Ovary (tissue), 10 donors: ENCODE measurements at regions of chr18 and their contacts with region 1.

Region 1: GRCh38 chr18:21897811-21898210 is 157.2 kb downstream of the MIB1 start:
- DNase-seq: peak in 3 of 5 donors; percentile 32 to 55 (median 43)
- H3K4me3 ChIP-seq: no peak overlapping the region
- H3K27ac ChIP-seq: no peak overlapping the region
- H3K4me1 ChIP-seq: no peaks in the 10 kb centered on the region
- H3K27me3 ChIP-seq: no peaks in the 10 kb centered on the region
- CTCF ChIP-seq: peak; percentile 46 to 63 (median 59)
- EP300 ChIP-seq: no peak
- POLR2A ChIP-seq: no peak

Region 2: GRCh38 chr18:21955757-21956652 is 58.2 kb after region 1 on chr18:
- intact Hi-C with region 1: loop called in 1 of 4 experiments (anchors 5 kb)
- DNase-seq: peak; percentile 66 to 87 (median 81)
- H3K4me3 ChIP-seq: no peak overlapping the region
- H3K27ac ChIP-seq: no peak overlapping the region
- H3K4me1 ChIP-seq: no peaks in the 10 kb centered on the region
- H3K27me3 ChIP-seq: no peaks in the 10 kb centered on the region
- CTCF ChIP-seq: peak; percentile 57 to 67 (median 65)
- EP300 ChIP-seq: no peak
- POLR2A ChIP-seq: no peak